ENCODE measurements at regions of chr6 and their contacts with region 1.

Region 1: DNA sequence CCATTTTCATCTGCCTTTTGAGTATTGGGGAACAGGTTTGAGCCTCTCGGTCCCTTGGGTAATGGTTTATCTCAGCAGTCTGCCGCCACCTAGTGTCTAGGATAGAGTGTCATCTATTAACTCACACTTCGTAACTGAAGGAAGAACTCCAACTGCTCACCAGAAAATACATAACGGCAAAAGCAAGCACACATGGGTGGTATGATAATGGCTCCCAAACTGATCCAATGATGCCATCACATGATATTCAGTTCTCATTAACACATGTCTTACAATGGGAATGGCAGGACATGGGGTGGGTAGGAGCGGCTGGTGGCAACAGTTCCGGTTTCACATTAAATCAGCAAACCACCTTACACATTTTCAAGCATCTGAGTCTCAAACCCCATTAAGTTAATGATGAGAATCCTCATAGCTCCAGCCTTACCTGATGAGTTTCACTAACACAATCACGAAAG is 110.7 kb upstream of the PHACTR1 start:
- DNase-seq: peak; percentile 76
- ATAC-seq: peak; percentile 83
- H3K4me3 ChIP-seq: peak overlapping the region in 3 of 5 experiments; percentile 32 to 50 (median 45)
- H3K4me3 Mint-ChIP-seq: peak overlapping the region; percentile 69
- H3K27ac ChIP-seq: no peak overlapping the region
- H3K27ac Mint-ChIP-seq: peak overlapping the region; percentile 33
- H3K4me1 ChIP-seq: peaks cover 12 to 20% of the 10 kb centered on the region in 2 donors
- H3K4me1 Mint-ChIP-seq: peaks cover 35% of the 10 kb centered on the region
- H3K27me3 ChIP-seq: peaks cover 0 to under 1% (median 0%) of the 10 kb centered on the region in 4 experiments
- H3K27me3 Mint-ChIP-seq: no peaks in the 10 kb centered on the region
- CTCF ChIP-seq: peak; percentile 80

Region 2: GRCh38 chr6:11585426-11586016 is 1020.4 kb before region 1 on chr6:
- CTCF ChIA-PET with region 1: no interaction called
- POLR2A ChIA-PET with region 1: no interaction called
- intact Hi-C with region 1: loop called (anchors 5 kb)
- DNase-seq: peak; percentile 28
- ATAC-seq: no peak
- H3K4me3 ChIP-seq: no peak overlapping the region
- H3K4me3 Mint-ChIP-seq: no peak overlapping the region
- H3K27ac ChIP-seq: no peak overlapping the region
- H3K27ac Mint-ChIP-seq: no peak overlapping the region
- H3K4me1 ChIP-seq: no peaks in the 10 kb centered on the region
- H3K4me1 Mint-ChIP-seq: no peaks in the 10 kb centered on the region
- H3K27me3 ChIP-seq: no peaks in the 10 kb centered on the region
- H3K27me3 Mint-ChIP-seq: peaks cover 4% of the 10 kb centered on the region
- CTCF ChIP-seq: peak; percentile 44

Region 3: GRCh38 chr6:11824986-11825385 is 780.9 kb before region 1 on chr6:
- CTCF ChIA-PET with region 1: interaction called, 3 read pairs
- POLR2A ChIA-PET with region 1: no interaction called
- intact Hi-C with region 1: loop called (anchors 10 kb)
- DNase-seq: peak; percentile 28
- ATAC-seq: peak; percentile 56
- H3K4me3 ChIP-seq: no peak overlapping the region
- H3K4me3 Mint-ChIP-seq: no peak overlapping the region
- H3K27ac ChIP-seq: no peak overlapping the region
- H3K27ac Mint-ChIP-seq: no peak overlapping the region
- H3K4me1 ChIP-seq: peaks cover 14 to 16% of the 10 kb centered on the region in 2 donors
- H3K4me1 Mint-ChIP-seq: peaks cover 30% of the 10 kb centered on the region
- H3K27me3 ChIP-seq: no peaks in the 10 kb centered on the region
- H3K27me3 Mint-ChIP-seq: no peaks in the 10 kb centered on the region
- CTCF ChIP-seq: no peak

Region 4: DNA sequence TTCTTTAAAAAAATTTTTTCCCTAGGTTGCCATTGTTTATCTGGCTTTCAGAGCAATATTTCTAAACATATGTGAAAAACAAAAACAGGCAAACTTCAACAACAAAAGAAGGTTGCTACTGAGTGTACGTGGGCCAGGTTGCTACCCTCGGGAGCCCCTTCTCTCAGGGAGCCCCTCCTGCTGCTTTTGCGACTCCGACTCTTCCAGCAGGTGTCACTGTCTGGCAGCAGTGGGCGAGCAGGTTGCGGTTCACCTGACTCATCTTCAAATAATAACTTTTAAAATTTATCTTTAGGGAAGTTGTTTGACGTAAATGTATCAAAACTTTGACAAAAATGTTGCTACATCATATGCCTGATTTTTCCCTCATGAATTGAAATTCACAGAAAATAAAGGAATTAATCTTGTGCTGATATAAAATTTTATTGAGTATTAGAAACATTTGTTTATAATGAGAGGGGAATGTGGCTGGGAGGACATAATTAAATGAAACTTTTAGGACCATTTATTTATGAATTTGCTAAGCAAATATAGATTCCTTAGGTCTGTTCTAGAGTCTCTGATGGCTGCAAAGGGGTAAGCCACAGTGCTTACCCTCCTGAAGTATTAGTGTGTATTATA is 455.0 kb before region 1 on chr6:
- CTCF ChIA-PET with region 1: no interaction called
- POLR2A ChIA-PET with region 1: no interaction called
- intact Hi-C with region 1: loop called (anchors 5 kb)
- DNase-seq: peak; percentile 20
- ATAC-seq: no peak
- H3K4me3 ChIP-seq: no peak overlapping the region
- H3K4me3 Mint-ChIP-seq: no peak overlapping the region
- H3K27ac ChIP-seq: no peak overlapping the region
- H3K27ac Mint-ChIP-seq: no peak overlapping the region
- H3K4me1 ChIP-seq: no peaks in the 10 kb centered on the region
- H3K4me1 Mint-ChIP-seq: peaks cover 12% of the 10 kb centered on the region
- H3K27me3 ChIP-seq: no peaks in the 10 kb centered on the region
- H3K27me3 Mint-ChIP-seq: no peaks in the 10 kb centered on the region
- CTCF ChIP-seq: peak; percentile 46

Region 5: DNA sequence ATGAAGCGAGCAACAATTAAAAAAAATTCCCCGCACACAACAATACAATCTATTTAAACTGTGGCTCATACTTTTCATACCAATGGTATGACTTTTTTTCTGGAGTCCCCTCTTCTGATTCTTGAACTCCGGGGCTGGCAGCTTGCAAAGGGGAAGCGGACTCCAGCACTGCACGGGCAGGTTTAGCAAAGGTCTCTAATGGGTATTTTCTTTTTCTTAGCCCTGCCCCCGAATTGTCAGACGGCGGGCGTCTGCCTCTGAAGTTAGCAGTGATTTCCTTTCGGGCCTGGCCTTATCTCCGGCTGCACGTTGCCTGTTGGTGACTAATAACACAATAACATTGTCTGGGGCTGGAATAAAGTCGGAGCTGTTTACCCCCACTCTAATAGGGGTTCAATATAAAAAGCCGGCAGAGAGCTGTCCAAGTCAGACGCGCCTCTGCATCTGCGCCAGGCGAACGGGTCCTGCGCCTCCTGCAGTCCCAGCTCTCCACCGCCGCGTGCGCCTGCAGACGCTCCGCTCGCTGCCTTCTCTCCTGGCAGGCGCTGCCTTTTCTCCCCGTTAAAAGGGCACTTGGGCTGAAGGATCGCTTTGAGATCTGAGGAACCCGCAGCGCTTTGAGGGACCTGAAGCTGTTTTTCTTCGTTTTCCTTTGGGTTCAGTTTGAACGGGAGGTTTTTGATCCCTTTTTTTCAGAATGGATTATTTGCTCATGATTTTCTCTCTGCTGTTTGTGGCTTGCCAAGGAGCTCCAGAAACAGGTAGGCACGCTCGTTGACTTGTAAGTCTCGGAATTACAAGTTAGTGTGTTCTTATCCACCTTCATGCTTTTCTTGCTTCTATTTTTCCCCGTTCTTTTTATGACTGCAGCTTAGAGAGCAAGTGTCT is 315.7 kb before region 1 on chr6 and contains the start of gene EDN1:
- CTCF ChIA-PET with region 1: interaction called, 18 read pairs
- POLR2A ChIA-PET with region 1: no interaction called
- intact Hi-C with region 1: loop called (anchors 5 kb)
- DNase-seq: peak; percentile 63
- ATAC-seq: peak; percentile 77
- H3K4me3 ChIP-seq: peak within 1 kb of the TSS; percentile 32 to 87 (median 55)
- H3K4me3 Mint-ChIP-seq: peak within 1 kb of the TSS; percentile 89
- H3K27ac ChIP-seq: no peak within 1 kb of the TSS
- H3K27ac Mint-ChIP-seq: no peak within 1 kb of the TSS
- H3K4me1 ChIP-seq: peaks cover 7 to 14% of the 10 kb centered on the region in 2 donors
- H3K4me1 Mint-ChIP-seq: peaks cover 17% of the 10 kb centered on the region
- H3K27me3 ChIP-seq: peaks cover 0 to 31% (median 18%) of the 10 kb centered on the region in 4 experiments
- H3K27me3 Mint-ChIP-seq: peaks cover 44% of the 10 kb centered on the region
- CTCF ChIP-seq: peak; percentile 10
- total RNA-seq, gene EDN1: 2.1 and 2.6 TPM in 2 replicates

Region 6: DNA sequence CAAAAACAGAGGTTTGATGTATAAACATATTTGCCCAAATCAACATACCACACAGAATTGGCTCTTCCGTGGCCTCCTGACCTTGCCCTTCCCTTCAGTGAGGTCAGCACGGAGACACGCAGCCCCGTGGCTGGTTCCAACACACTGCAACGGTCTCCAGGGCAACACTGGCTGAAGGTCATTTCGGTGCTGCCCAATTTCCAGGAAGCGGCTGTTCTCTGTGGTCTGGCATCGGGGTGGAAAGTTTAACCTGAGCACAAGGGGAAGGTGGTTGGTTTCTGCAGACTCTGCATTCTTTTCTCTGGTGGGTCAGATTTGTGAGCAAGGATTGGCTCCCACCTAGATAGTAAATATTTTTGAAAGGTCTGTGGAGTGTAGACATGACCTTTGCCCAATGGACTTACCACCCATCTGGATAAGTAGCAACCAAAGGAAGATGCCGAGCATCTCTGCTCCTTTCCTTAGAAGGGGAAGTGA is 67.0 kb before region 1 on chr6:
- CTCF ChIA-PET with region 1: no interaction called
- POLR2A ChIA-PET with region 1: no interaction called
- intact Hi-C with region 1: no loop called
- DNase-seq: no peak
- ATAC-seq: no peak
- H3K4me3 ChIP-seq: no peak overlapping the region
- H3K4me3 Mint-ChIP-seq: no peak overlapping the region
- H3K27ac ChIP-seq: no peak overlapping the region
- H3K27ac Mint-ChIP-seq: no peak overlapping the region
- H3K4me1 ChIP-seq: no peaks in the 10 kb centered on the region
- H3K4me1 Mint-ChIP-seq: no peaks in the 10 kb centered on the region
- H3K27me3 ChIP-seq: peaks cover 0 to 6% (median 2%) of the 10 kb centered on the region in 4 experiments
- H3K27me3 Mint-ChIP-seq: peaks cover 25% of the 10 kb centered on the region
- CTCF ChIP-seq: no peak

Measured in B cell (primary cell).